Motor neuron (in vitro differentiated cells): ENCODE measurements at regions of chr12 and their contacts with region 1.

Region 1: DNA sequence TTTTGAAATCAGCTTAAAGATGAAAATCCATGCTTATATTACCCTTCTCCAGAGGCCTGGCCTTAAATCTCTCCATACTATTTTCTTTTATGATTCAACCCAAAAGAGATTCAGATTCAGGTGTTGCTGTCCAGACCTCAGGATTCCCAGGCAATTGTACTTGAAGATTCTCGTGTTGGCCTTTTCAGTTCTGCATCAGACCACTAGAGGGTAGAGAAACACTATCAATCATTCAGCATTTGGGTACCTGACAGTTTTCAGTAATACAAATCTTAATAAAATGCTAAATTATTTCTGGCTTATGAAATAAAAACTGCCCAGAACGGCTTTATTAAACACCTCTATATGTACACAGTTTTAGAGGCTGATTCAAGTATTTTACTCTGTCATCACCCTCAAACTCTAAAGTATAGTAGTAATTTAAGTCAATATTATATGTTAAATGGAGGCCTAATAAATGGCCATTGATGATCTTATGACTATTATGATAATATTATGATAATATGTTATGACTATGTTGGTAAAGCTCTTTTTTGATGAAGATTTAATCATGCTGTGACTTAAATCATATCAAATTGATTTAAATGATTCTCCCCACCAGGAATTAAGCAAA is 301.1 kb downstream of the DUSP6 start:
- ATAC-seq: peak in 4 of 8 experiments; percentile 40 to 63 (median 52)
- H3K4me3 ChIP-seq: no peak overlapping the region
- H3K27ac ChIP-seq: no peak overlapping the region
- H3K4me1 ChIP-seq: peaks cover 6 to 31% of the 10 kb centered on the region in 2 donors

Region 2: DNA sequence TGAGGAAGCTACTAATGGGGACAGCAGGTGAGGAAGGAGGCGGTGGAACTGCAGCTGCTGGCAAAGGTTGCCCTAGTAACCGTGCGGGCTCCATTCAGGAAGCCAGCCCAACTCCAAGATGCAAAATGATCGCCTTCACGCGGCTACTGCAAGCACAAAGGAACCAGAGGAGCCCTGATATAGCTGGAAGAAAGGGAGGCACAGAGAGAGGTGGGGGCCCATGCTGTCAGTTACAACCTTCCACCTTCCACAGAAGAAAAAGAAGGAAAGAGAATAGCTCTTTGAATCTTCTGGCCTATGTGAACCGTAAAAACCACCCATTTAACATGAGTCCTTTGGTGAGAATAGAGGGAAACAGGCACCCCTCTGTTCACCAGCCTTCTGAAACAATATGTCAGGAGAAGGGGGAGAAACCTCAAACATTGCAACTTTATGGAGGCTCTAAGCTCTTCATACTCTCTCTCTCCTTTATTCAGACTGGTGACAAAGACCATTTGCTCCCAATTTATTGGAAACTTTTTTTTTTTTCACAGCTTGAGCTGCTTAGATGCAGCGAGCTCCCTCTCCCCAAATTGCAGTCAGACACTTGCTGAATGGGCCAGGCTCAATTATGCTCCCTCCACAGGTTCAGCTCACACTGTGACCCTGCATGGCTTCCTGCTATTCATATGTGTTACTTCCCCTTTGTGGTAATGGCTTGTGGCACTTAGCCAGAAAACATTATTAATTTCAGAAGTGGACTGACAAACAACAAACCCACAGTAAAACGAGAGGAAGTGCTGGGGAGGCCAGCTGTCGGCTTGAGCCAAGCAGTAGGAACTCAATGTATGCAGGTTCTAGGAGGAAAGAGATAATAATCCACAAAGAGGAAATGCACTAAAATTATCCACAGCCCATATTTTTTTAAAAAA is 294.9 kb after region 1 on chr12:
- in situ Hi-C with region 1: loop called in 1 of 9 experiments (anchors 25 kb)
- ATAC-seq: peak; percentile 15 to 75 (median 54)
- H3K4me3 ChIP-seq: peak overlapping the region in 3 of 5 donors; percentile 3 to 23 (median 16)
- H3K27ac ChIP-seq: peak overlapping the region; percentile 33 to 38
- H3K4me1 ChIP-seq: peaks cover 27 to 49% of the 10 kb centered on the region in 2 donors

Region 3: DNA sequence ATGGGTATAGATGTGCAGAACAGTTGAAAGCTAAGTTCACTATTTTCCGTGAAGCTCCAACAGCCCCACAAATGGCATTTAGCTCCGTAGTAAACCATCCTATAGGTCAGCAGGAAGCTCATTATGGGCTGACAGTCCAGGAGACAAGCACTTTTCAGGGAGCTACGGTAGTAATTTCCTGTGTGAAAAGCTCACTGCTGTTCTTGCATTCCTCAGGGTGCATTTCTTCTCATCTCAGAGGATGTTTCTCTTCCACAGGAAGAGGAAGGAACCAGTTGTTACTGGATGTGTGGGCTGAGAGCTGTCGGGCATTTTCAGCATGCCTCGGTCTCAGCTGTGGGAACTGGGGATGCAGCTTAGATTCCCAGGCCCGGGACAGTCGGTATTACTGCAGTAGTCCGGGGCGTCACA is 400.7 kb after region 1 on chr12:
- in situ Hi-C with region 1: loop called in 3 of 9 experiments (anchors 10 to 25 kb)
- ATAC-seq: peak in 7 of 8 experiments; percentile 60 to 96 (median 91)
- H3K4me3 ChIP-seq: peak overlapping the region in 1 of 5 donors; percentile 6
- H3K27ac ChIP-seq: no peak overlapping the region
- H3K4me1 ChIP-seq: peaks cover 3 to 6% of the 10 kb centered on the region in 2 donors